ENCODE measurements at regions of chr16 and their contacts with region 1.

Region 1: DNA sequence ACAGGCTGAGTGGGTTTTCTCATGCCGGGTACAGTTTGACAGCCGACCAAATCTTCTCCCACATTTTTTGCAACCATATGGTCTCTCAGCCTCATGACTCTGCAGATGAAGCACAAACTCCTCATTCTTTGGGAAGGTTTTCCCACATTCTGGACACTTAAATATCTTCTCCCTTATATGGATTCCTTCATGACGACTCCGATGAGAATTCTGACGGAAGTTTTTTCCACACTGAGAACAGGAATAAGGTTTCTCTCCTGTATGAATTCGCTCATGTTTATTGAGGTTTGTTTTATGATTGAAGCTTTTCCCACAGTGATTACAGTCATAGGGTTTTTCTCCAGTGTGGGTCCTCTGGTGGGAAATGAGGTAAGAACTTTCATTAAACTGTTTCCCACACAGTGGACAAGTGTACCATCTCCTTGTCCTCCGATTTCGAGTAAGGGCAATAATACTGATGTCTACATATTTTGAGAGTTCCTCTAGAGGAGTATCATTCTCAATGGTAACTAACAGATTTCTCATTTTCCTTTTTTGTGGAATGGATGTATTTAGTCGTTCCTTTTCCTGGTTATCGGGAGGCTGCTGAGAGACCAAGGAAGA is 10.9 kb downstream of the ZNF200 start:
- DNase-seq: no peak
- H3K4me3 ChIP-seq: no peak overlapping the region
- H3K27ac ChIP-seq: no peak overlapping the region
- H3K4me1 ChIP-seq: no peaks in the 10 kb centered on the region
- H3K27me3 ChIP-seq: no peaks in the 10 kb centered on the region
- CTCF ChIP-seq: no peak
- POLR2A ChIP-seq: no peak

Region 2: GRCh38 chr16:3317315-3317999 is 93.4 kb after region 1 on chr16:
- intact Hi-C with region 1: loop called (anchors 5 kb)
- DNase-seq: no peak
- H3K4me3 ChIP-seq: no peak overlapping the region
- H3K27ac ChIP-seq: no peak overlapping the region
- H3K4me1 ChIP-seq: no peaks in the 10 kb centered on the region
- H3K27me3 ChIP-seq: no peaks in the 10 kb centered on the region
- CTCF ChIP-seq: no peak
- POLR2A ChIP-seq: no peak

Measured in thyroid gland (tissue), 4 donors.